Naive thymus-derived CD4-positive, alpha-beta T cell (primary cell): ENCODE measurements at regions of chr4 and their contacts with region 1.

Region 1: DNA sequence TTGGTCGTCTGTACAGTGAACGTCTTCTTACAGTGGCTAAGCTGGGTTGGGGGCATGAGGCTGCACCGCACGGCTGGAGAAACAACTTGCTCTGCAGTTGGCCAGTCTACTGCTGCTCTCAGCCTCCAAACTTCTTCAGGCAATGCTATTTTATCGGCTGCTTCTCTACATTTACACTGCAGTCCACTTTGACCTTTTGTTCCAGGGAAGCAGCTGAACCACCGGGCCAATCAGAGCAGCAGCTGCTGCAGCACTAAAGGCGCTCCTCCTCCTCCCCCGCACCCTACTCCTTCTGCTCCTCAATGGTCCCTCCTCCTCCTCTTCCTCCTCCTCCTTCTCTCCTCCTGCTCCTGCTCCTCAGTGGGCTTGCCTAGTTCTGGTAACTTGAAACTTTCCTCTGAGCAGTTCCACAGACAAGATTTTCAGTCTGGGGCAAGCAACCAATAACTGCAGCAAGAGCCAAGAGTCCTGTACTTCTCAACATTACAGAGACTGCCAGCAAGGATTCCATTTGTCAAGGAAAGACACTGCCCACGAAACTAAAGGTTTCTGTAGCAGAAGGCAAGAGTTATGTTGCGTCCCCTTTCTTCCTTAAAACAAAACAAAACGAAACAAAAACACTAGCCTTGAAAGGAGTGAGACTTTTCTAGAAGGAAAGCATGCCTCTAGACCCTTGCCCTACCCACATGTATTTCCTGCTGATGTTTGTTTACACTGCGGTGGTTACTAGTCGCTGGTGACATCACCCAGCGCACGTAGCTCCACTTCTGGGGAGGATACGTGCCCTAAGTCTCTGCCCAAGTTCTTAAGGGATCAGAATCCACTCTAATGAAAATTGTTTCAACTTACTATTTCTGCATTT is 125.7 kb upstream of the NAP1L5 start:
- DNase-seq: peak; percentile 23 to 90 (median 84)
- ATAC-seq: peak; percentile 96
- H3K4me3 ChIP-seq: peak overlapping the region; percentile 62
- H3K4me3 Mint-ChIP-seq: peak overlapping the region; percentile 88 to 99 (median 96)
- H3K27ac ChIP-seq: peak overlapping the region; percentile 83
- H3K27ac Mint-ChIP-seq: peak overlapping the region; percentile 88 to 99 (median 98)
- H3K4me1 ChIP-seq: peaks cover 0 to 13% of the 10 kb centered on the region in 2 donors
- H3K4me1 Mint-ChIP-seq: peaks cover 0 to 46% (median 37%) of the 10 kb centered on the region in 7 donors
- H3K27me3 ChIP-seq: no peaks in the 10 kb centered on the region
- H3K27me3 Mint-ChIP-seq: no peaks in the 10 kb centered on the region

Region 2: GRCh38 chr4:87220094-87220822 is 1603.0 kb before region 1 on chr4 and contains the start of gene KLHL8:
- CTCF ChIA-PET with region 1: no interaction called
- POLR2A ChIA-PET with region 1: no interaction called
- intact Hi-C with region 1: loop called in 1 of 2 experiments (anchors 5 kb)
- DNase-seq: peak; percentile 82 to 94 (median 89)
- ATAC-seq: peak; percentile 97
- H3K4me3 ChIP-seq: peak within 1 kb of the TSS; percentile 97
- H3K4me3 Mint-ChIP-seq: peak within 1 kb of the TSS; percentile 73 to 99 (median 94)
- H3K27ac ChIP-seq: peak within 1 kb of the TSS; percentile 92
- H3K27ac Mint-ChIP-seq: peak within 1 kb of the TSS; percentile 71 to 95 (median 91)
- H3K4me1 ChIP-seq: peaks cover 0 to 8% of the 10 kb centered on the region in 2 donors
- H3K4me1 Mint-ChIP-seq: peaks cover 6 to 32% (median 17%) of the 10 kb centered on the region in 7 donors
- H3K27me3 ChIP-seq: no peaks in the 10 kb centered on the region
- H3K27me3 Mint-ChIP-seq: peaks cover 0 to 14% (median 0%) of the 10 kb centered on the region in 5 donors
- total RNA-seq, gene KLHL8: 10.9 to 15.7 (median 11.6) TPM

Region 3: DNA sequence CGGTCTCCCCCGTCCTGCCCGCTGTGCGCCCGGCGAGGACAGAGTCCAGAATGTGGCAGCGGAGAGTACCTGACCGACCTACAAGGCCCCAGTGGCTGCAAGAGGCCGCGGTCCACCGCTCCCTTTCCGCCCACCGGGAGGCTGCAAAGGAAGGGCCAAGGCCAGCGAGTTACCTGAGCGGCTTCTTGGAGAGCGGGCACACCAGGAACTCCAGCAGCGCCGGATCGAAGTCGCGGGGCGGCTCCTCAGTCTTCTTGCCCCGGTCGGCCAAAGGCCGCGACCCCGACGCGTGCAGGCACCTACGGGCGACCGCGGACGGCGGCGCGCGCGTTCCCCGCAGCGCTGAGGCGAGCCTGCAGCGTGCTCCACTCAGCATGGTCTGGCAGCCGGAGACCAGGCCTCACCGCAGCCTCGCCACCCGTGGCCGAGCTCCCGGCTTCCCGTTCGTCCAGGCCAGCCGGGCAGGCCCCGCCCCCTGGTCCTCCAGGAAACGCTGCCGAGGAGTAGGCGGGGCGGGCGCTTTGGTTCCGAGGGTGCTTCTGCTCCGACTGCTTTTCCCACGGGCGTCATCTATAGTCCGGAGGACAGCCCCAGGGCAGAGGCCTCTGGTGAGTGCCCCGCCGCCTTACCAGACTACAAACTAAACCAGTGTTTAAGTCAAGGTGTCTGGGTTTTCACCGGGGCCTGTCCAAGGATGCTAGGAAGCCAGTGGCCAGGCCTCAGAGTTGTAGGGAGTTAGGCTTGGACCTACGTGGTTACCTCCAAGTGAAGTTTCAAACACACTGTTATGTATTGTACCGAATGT is 299.8 kb before region 1 on chr4 and contains the start of gene PYURF:
- CTCF ChIA-PET with region 1: no interaction called
- POLR2A ChIA-PET with region 1: interaction called, 3 read pairs
- intact Hi-C with region 1: loop called (anchors 1 kb)
- DNase-seq: peak; percentile 46 to 85 (median 50)
- ATAC-seq: peak; percentile 85
- H3K4me3 ChIP-seq: peak within 1 kb of the TSS; percentile 75
- H3K4me3 Mint-ChIP-seq: peak within 1 kb of the TSS; percentile 88 to 98 (median 92)
- H3K27ac ChIP-seq: peak within 1 kb of the TSS; percentile 79
- H3K27ac Mint-ChIP-seq: peak within 1 kb of the TSS; percentile 88 to 97 (median 93)
- H3K4me1 ChIP-seq: peaks cover 10 to 19% of the 10 kb centered on the region in 2 donors
- H3K4me1 Mint-ChIP-seq: peaks cover 0 to 56% (median 48%) of the 10 kb centered on the region in 7 donors
- H3K27me3 ChIP-seq: no peaks in the 10 kb centered on the region
- H3K27me3 Mint-ChIP-seq: no peaks in the 10 kb centered on the region
- total RNA-seq, gene PYURF: 33.0 to 57.7 (median 47.4) TPM

Region 4: DNA sequence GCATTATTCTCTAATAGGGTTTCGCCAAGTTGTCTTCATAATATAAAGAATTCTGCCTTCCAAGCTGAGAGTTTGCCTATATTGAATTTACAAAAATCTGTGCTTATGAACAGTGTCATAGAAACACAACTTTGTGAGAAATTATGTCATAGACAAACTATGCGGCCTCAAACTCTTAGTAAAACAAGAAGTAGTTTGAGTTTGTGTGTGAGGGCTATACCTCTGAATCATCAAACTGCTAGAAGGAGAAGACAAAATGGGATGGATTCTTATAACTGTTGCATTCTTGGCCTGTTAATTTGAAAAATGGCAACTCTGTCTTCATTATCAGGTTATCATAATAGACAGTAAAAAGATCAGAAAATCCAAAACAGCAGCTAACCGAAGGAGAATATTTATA is 79.6 kb before region 1 on chr4:
- CTCF ChIA-PET with region 1: no interaction called
- POLR2A ChIA-PET with region 1: no interaction called
- intact Hi-C with region 1: no loop called
- DNase-seq: no peak
- ATAC-seq: no peak
- H3K4me3 ChIP-seq: no peak overlapping the region
- H3K4me3 Mint-ChIP-seq: no peak overlapping the region
- H3K27ac ChIP-seq: no peak overlapping the region
- H3K27ac Mint-ChIP-seq: no peak overlapping the region
- H3K4me1 ChIP-seq: peaks cover 0 to 4% of the 10 kb centered on the region in 2 donors
- H3K4me1 Mint-ChIP-seq: peaks cover 0 to 24% (median 11%) of the 10 kb centered on the region in 7 donors
- H3K27me3 ChIP-seq: no peaks in the 10 kb centered on the region
- H3K27me3 Mint-ChIP-seq: no peaks in the 10 kb centered on the region

Region 5: GRCh38 chr4:88893961-88894360 is 70.7 kb after region 1 on chr4:
- CTCF ChIA-PET with region 1: no interaction called
- POLR2A ChIA-PET with region 1: no interaction called
- intact Hi-C with region 1: loop called in 1 of 2 experiments (anchors 5 kb)
- DNase-seq: no peak
- ATAC-seq: no peak
- H3K4me3 ChIP-seq: no peak overlapping the region
- H3K4me3 Mint-ChIP-seq: no peak overlapping the region
- H3K27ac ChIP-seq: no peak overlapping the region
- H3K27ac Mint-ChIP-seq: no peak overlapping the region
- H3K4me1 ChIP-seq: no peaks in the 10 kb centered on the region
- H3K4me1 Mint-ChIP-seq: peaks cover 0 to 1% (median 0%) of the 10 kb centered on the region in 7 donors
- H3K27me3 ChIP-seq: no peaks in the 10 kb centered on the region
- H3K27me3 Mint-ChIP-seq: peaks cover 0 to 4% (median under 1%) of the 10 kb centered on the region in 5 donors

Region 6: DNA sequence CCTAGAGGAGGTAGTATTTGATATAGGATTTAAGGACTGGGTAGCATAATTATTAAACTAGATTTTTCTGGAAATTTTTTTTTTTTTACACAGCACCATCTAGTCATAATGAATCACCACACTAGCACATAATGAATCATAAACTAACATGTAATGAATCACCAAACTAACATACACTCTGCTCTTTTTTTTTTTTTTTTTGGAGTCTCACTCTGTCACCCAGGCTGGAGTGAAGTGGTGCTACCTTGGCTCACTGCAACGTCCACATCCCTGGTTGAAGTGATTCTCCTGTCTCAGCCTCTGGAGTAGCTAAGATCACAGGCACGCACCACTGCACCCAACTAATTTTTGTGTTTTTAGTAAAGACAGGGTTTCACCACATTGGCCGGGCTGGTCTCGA is 141.2 kb after region 1 on chr4:
- CTCF ChIA-PET with region 1: interaction called, 3 read pairs
- POLR2A ChIA-PET with region 1: no interaction called
- intact Hi-C with region 1: loop called in 1 of 2 experiments (anchors 5 kb)
- DNase-seq: no peak
- ATAC-seq: peak; percentile 24
- H3K4me3 ChIP-seq: no peak overlapping the region
- H3K4me3 Mint-ChIP-seq: no peak overlapping the region
- H3K27ac ChIP-seq: no peak overlapping the region
- H3K27ac Mint-ChIP-seq: no peak overlapping the region
- H3K4me1 ChIP-seq: peaks cover 0 to 8% of the 10 kb centered on the region in 2 donors
- H3K4me1 Mint-ChIP-seq: peaks cover 0 to 25% (median 16%) of the 10 kb centered on the region in 7 donors
- H3K27me3 ChIP-seq: no peaks in the 10 kb centered on the region
- H3K27me3 Mint-ChIP-seq: peaks cover 0 to 11% (median 0%) of the 10 kb centered on the region in 5 donors

Region 7: DNA sequence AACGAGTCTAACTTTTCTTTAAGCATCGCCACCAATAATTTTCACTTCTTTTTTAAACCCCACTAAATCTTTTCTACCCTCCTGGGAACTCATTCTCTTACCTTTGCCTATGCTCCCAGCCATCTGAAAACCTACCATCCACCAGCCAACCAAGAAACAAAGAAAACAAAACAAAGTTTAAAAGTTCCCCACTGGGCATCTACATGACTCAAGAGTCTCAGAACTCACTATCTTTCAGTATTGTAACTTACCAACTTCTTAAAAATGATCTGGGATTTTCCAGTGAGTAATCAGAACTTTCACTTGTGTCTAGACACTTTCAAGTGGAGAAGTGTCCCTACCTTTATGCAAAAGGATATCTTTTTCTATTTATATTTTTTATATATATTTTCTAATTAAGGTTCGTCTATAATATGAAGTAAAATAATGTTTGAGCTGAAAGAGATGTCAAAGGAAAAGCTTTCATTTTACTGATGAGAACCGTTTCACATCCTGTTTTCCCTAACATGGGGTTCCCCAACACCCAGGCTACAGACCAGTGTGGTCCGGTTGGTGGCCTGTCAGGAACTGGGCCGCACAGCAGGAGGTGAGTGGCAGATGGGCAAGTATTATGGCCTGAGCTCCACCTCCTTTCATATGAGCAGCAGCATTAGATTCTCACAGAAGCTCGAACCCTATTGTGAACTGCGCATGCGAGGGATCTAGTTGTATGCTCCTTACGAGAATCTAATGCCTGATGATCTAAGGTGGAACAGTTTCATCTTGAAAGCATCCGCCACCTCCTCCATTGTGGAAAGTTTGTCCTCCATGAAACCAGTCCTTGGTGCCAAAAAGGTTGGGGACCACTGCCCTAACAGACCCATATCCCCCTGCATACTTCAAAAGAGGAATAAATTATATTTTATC is 278.2 kb after region 1 on chr4:
- CTCF ChIA-PET with region 1: no interaction called
- POLR2A ChIA-PET with region 1: no interaction called
- intact Hi-C with region 1: no loop called
- DNase-seq: no peak
- ATAC-seq: no peak
- H3K4me3 ChIP-seq: no peak overlapping the region
- H3K4me3 Mint-ChIP-seq: no peak overlapping the region
- H3K27ac ChIP-seq: no peak overlapping the region
- H3K27ac Mint-ChIP-seq: no peak overlapping the region
- H3K4me1 ChIP-seq: no peaks in the 10 kb centered on the region
- H3K4me1 Mint-ChIP-seq: peaks cover 0 to 10% (median 5%) of the 10 kb centered on the region in 7 donors
- H3K27me3 ChIP-seq: no peaks in the 10 kb centered on the region
- H3K27me3 Mint-ChIP-seq: peaks cover 0 to 5% (median 4%) of the 10 kb centered on the region in 5 donors

Region 8: GRCh38 chr4:89158884-89159503 is 335.7 kb after region 1 on chr4:
- CTCF ChIA-PET with region 1: no interaction called
- POLR2A ChIA-PET with region 1: no interaction called
- intact Hi-C with region 1: loop called in 1 of 2 experiments (anchors 5 kb)
- DNase-seq: peak in 5 of 9 donors; percentile 5 to 30 (median 21)
- ATAC-seq: peak; percentile 82
- H3K4me3 ChIP-seq: no peak overlapping the region
- H3K4me3 Mint-ChIP-seq: no peak overlapping the region
- H3K27ac ChIP-seq: no peak overlapping the region
- H3K27ac Mint-ChIP-seq: no peak overlapping the region
- H3K4me1 ChIP-seq: no peaks in the 10 kb centered on the region
- H3K4me1 Mint-ChIP-seq: peaks cover 0 to 5% (median 0%) of the 10 kb centered on the region in 7 donors
- H3K27me3 ChIP-seq: no peaks in the 10 kb centered on the region
- H3K27me3 Mint-ChIP-seq: peaks cover 3 to 20% (median 5%) of the 10 kb centered on the region in 5 donors

Region 9: GRCh38 chr4:89434364-89434988 is 611.2 kb after region 1 on chr4:
- CTCF ChIA-PET with region 1: no interaction called
- POLR2A ChIA-PET with region 1: no interaction called
- intact Hi-C with region 1: loop called in 1 of 2 experiments (anchors 5 kb)
- DNase-seq: peak in 6 of 9 donors; percentile 28 to 61 (median 45)
- ATAC-seq: peak; percentile 72
- H3K4me3 ChIP-seq: no peak overlapping the region
- H3K4me3 Mint-ChIP-seq: no peak overlapping the region
- H3K27ac ChIP-seq: no peak overlapping the region
- H3K27ac Mint-ChIP-seq: peak overlapping the region in 1 of 9 donors; percentile 14
- H3K4me1 ChIP-seq: no peaks in the 10 kb centered on the region
- H3K4me1 Mint-ChIP-seq: peaks cover 8 to 23% (median 13%) of the 10 kb centered on the region in 7 donors
- H3K27me3 ChIP-seq: no peaks in the 10 kb centered on the region
- H3K27me3 Mint-ChIP-seq: no peaks in the 10 kb centered on the region